ENCODE measurements at regions of chr5 and their contacts with region 1.

Region 1: GRCh38 chr5:119411935-119412602 is 40.2 kb upstream of the HSD17B4 start:
- DNase-seq: peak; percentile 64 to 73 (median 69)
- H3K4me3 ChIP-seq: peak overlapping the region; percentile 33 to 39
- H3K4me3 Mint-ChIP-seq: peak overlapping the region; percentile 79 to 91 (median 83)
- H3K27ac ChIP-seq: no peak overlapping the region
- H3K27ac Mint-ChIP-seq: peak overlapping the region in 6 of 7 donors; percentile 43 to 88 (median 58)
- H3K4me1 ChIP-seq: peaks cover 7% of the 10 kb centered on the region
- H3K4me1 Mint-ChIP-seq: peaks cover 12 to 24% (median 15%) of the 10 kb centered on the region in 4 donors
- H3K27me3 ChIP-seq: no peaks in the 10 kb centered on the region
- H3K27me3 Mint-ChIP-seq: peaks cover 4 to 5% of the 10 kb centered on the region in 2 donors

Region 2: DNA sequence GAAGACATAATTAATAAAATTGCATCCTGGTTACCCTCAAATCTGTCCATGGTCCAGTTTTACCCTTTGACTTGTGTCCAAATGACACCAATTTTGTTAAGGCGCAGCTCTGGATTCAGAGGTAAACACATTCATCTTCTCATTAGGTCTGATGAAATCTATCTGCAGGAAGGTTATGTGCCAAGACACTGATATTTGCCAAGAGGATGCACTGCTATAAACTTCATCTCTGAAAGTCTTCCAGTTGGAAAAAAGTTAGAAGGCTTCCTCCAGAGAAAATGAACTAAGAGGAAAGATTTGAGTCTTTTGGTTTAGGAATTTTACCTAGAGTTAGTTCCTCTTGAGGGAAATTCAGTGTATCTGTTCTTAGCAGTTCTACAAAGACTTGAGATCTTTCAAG is 1141.5 kb before region 1 on chr5:
- CTCF ChIA-PET with region 1: no interaction called
- POLR2A ChIA-PET with region 1: no interaction called
- intact Hi-C with region 1: no loop called
- DNase-seq: no peak
- H3K4me3 ChIP-seq: no peak overlapping the region
- H3K4me3 Mint-ChIP-seq: no peak overlapping the region
- H3K27ac ChIP-seq: no peak overlapping the region
- H3K27ac Mint-ChIP-seq: no peak overlapping the region
- H3K4me1 ChIP-seq: no peaks in the 10 kb centered on the region
- H3K4me1 Mint-ChIP-seq: no peaks in the 10 kb centered on the region
- H3K27me3 ChIP-seq: no peaks in the 10 kb centered on the region
- H3K27me3 Mint-ChIP-seq: no peaks in the 10 kb centered on the region

Region 3: DNA sequence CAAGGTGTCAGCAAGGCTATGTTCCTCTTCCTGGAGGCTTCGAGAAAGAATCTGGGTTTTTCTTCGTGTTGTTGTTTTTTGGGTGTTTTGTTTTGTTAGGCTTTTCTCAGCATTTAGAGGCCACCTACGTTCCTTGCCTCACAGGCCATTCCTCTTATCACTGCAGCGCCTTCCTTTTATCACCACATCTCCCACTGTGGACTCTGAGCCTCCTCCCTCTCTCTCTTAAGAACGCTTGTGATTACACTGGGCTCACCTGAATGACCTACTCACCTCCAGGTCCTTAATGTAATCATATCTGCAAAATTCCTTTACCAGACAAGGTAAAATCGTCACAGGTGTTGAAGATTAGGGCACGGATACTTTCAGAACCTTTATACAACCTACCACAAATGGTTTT is 764.5 kb before region 1 on chr5:
- CTCF ChIA-PET with region 1: no interaction called
- POLR2A ChIA-PET with region 1: no interaction called
- intact Hi-C with region 1: no loop called
- DNase-seq: no peak
- H3K4me3 ChIP-seq: no peak overlapping the region
- H3K4me3 Mint-ChIP-seq: no peak overlapping the region
- H3K27ac ChIP-seq: no peak overlapping the region
- H3K27ac Mint-ChIP-seq: no peak overlapping the region
- H3K4me1 ChIP-seq: no peaks in the 10 kb centered on the region
- H3K4me1 Mint-ChIP-seq: no peaks in the 10 kb centered on the region
- H3K27me3 ChIP-seq: no peaks in the 10 kb centered on the region
- H3K27me3 Mint-ChIP-seq: no peaks in the 10 kb centered on the region

Region 4: DNA sequence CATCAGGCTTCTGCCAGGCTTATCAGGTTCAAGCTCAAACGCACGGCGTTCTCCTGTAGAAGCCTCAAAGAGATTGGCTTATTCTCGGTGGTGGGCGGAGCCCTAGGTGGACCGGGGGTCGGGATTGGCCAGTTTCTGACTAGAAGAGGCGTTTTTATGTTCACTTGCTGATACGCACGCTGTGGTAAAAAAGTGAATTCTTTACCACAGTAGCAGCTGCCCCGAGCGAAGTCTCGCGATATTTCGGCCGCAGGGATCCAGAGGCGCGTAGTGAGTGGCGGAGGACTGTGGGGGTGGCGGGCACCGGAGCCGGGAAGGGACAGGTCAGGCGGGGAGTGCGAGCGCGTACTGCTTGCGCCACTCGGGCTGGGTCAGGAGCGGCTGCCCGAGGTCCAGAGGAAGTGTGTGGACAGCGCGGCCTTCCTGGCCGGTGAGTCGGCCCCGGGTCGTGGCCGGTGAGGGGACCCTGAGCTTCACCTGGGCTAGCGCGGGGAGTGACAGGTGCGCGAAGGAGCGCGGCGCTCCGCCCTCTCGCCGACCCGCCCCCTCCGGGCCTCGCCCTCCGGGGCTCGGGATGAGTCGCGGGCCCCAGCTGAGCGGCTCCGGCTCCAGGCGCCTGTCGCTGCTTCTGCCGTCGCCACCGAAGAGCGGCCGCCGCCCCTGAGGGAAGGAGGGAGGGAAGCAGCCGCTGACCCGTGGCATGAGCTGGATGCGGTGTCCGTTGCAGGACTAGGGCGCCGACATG is 341.1 kb before region 1 on chr5 and contains the start of gene DMXL1:
- CTCF ChIA-PET with region 1: interaction called, 18 read pairs
- POLR2A ChIA-PET with region 1: interaction called, 6 read pairs
- intact Hi-C with region 1: loop called (anchors 2 kb)
- DNase-seq: peak; percentile 97 to 99 (median 98)
- H3K4me3 ChIP-seq: peak within 1 kb of the TSS; percentile 63 to 95
- H3K4me3 Mint-ChIP-seq: peak within 1 kb of the TSS; percentile 92 to 99 (median 99)
- H3K27ac ChIP-seq: peak within 1 kb of the TSS; percentile 86
- H3K27ac Mint-ChIP-seq: peak within 1 kb of the TSS; percentile 99 to 100 (median 99)
- H3K4me1 ChIP-seq: peaks cover 48% of the 10 kb centered on the region
- H3K4me1 Mint-ChIP-seq: peaks cover 21 to 46% (median 29%) of the 10 kb centered on the region in 4 donors
- H3K27me3 ChIP-seq: no peaks in the 10 kb centered on the region
- H3K27me3 Mint-ChIP-seq: peaks cover 0 to 2% of the 10 kb centered on the region in 2 donors
- total RNA-seq, gene DMXL1: 33.2 to 37.9 TPM

Region 5: DNA sequence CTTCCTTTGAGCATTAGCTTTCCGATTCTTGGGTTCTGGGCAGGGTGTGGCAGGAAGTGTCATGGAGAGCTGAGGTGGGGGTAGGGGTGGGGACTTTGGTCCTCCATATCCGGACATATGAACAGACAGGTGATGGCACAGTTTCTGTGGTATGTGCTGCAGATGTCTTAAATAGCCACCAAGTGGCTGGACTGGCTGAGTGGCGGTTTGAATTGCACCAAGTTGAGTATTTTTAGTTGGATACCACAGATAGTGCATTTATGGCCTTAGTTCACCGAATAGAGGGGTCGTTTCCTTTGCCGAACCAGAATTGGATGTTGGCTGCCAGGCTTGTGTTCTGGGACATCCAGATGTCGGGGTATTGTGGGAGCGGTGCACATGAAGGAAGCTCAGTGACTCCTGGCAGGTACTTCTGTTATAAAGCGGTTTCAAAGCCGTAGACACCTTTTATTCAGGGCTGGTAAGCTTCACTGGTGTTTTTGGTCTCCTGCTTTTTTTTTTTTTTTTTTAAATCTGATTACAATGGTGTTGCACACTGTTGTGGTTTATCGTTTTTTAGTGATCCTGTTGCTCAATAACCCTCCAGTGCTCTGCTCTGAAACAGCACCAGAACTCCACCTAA is 71.4 kb before region 1 on chr5:
- CTCF ChIA-PET with region 1: interaction called, 112 read pairs
- POLR2A ChIA-PET with region 1: interaction called, 4 read pairs
- intact Hi-C with region 1: no loop called
- DNase-seq: peak; percentile 71 to 85 (median 77)
- H3K4me3 ChIP-seq: peak overlapping the region; percentile 40 to 63
- H3K4me3 Mint-ChIP-seq: peak overlapping the region; percentile 80 to 89 (median 86)
- H3K27ac ChIP-seq: peak overlapping the region; percentile 75
- H3K27ac Mint-ChIP-seq: peak overlapping the region; percentile 89 to 97 (median 92)
- H3K4me1 ChIP-seq: peaks cover 99% of the 10 kb centered on the region
- H3K4me1 Mint-ChIP-seq: peaks cover 81 to 97% (median 89%) of the 10 kb centered on the region in 4 donors
- H3K27me3 ChIP-seq: no peaks in the 10 kb centered on the region
- H3K27me3 Mint-ChIP-seq: no peaks in the 10 kb centered on the region

Region 6: DNA sequence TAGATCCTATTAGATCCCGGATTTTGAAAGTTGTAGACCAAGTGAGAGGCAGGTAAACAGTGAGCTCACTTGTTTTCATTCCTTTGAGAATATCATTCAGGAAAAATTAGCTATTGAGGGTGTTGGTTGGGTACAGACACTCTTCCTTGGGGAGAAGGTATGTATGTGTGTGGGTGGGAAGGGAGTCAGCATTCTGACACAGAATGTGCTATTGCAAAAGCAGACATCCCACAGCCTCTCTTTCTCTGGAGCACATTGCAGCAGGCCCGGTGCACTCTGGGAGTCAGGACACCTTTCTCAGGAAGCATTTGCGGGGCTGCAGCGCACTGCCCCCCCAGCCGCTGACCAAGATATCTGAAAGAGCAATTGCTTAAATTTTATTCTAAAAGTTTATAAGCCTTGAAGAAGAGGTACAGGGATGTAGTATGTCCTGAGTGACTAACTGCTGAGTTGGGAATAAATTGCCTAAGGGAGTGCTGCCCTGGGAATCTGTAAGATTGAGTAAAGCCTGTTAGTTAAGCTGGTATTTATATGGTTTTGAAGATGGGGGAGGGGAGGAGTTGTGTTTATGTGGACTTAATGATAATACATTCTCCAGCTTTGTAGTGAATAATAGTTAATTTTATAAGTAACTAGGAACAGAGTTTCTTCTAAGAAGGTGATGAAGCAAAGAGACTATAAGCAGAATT is 51.0 kb before region 1 on chr5:
- CTCF ChIA-PET with region 1: interaction called, 23 read pairs
- POLR2A ChIA-PET with region 1: no interaction called
- intact Hi-C with region 1: no loop called
- DNase-seq: no peak
- H3K4me3 ChIP-seq: no peak overlapping the region
- H3K4me3 Mint-ChIP-seq: peak overlapping the region in 7 of 8 donors; percentile 43 to 92 (median 47)
- H3K27ac ChIP-seq: peak overlapping the region; percentile 11
- H3K27ac Mint-ChIP-seq: peak overlapping the region; percentile 86 to 97 (median 93)
- H3K4me1 ChIP-seq: peaks cover 98% of the 10 kb centered on the region
- H3K4me1 Mint-ChIP-seq: peaks cover 86 to 98% (median 93%) of the 10 kb centered on the region in 4 donors
- H3K27me3 ChIP-seq: no peaks in the 10 kb centered on the region
- H3K27me3 Mint-ChIP-seq: no peaks in the 10 kb centered on the region

Region 7: DNA sequence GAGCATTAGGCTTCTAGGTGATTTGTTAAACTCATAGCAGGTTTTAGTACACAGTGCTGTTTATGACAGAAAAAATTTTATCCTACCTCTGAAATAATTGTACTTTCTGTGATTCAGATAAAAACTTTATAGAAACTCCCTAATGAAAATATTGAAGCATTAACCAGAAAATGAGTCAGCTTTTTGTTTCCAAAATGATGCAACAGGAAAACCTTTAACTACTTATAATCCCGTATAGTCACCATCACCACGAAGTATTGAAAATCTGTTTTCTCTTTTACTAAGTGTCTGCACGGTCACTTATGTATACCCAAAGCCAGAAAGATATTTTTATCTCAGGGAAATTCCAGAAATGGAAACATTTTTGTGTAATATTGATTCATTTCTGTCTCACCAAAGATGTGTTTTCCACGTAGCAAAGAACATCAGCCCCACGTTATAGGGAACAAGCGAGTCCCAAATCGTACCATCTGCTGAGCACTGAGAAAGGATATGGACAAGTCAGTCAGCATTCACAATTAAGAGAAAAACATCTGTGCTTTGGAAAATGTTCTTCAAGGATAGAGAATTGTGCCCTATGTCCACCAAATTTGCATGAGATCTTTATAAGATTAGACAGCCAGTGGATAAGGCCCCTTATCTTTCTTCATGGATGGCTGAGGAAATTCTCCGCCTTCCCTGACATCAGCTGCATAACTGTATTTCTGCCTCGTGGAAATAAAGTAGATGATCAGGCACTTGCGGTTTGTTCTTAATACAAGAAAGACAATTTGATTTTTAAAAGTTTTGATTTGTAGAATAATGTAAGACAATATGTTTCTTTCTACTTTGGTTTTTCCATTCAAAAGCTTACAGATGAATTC is 14.3 kb before region 1 on chr5:
- CTCF ChIA-PET with region 1: interaction called, 14 read pairs
- POLR2A ChIA-PET with region 1: interaction called, 3 read pairs
- intact Hi-C with region 1: no loop called
- DNase-seq: peak in 1 of 5 donors; percentile 48
- H3K4me3 ChIP-seq: no peak overlapping the region
- H3K4me3 Mint-ChIP-seq: peak overlapping the region in 4 of 8 donors; percentile 3 to 76 (median 19)
- H3K27ac ChIP-seq: no peak overlapping the region
- H3K27ac Mint-ChIP-seq: peak overlapping the region; percentile 15 to 91 (median 69)
- H3K4me1 ChIP-seq: peaks cover 49% of the 10 kb centered on the region
- H3K4me1 Mint-ChIP-seq: peaks cover 46 to 62% (median 54%) of the 10 kb centered on the region in 4 donors
- H3K27me3 ChIP-seq: no peaks in the 10 kb centered on the region
- H3K27me3 Mint-ChIP-seq: no peaks in the 10 kb centered on the region

Measured in CD4-positive, alpha-beta memory T cell (primary cell).